Activated B cell treated with CpG ODN at 0.5 μM for 24 hours (primary cell): ENCODE measurements at regions of chr1 and their contacts with region 1.

Region 1: DNA sequence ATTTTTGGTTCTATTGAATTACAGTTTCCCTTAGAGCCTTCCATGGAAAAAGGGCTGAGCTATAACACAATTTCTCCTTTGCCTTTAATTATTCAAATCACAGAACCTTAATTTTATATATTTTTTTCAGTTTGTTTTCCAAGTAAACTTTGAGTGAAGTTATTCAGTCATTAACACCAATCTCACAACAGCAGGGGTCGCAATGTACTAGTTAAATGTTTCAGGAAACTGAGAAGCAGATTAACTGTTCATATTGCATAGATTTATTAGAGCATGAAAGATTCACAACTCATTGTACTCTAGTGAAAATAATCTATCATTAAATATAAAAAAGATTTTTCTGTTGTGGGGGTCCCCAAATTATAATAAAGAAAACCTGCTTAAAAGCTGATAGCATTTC is 64.1 kb downstream of the KIFAP3 start:
- DNase-seq: no peak
- ATAC-seq: no peak
- H3K4me3 Mint-ChIP-seq: no peak overlapping the region
- H3K27ac Mint-ChIP-seq: no peak overlapping the region
- H3K4me1 Mint-ChIP-seq: no peaks in the 10 kb centered on the region
- H3K27me3 Mint-ChIP-seq: no peaks in the 10 kb centered on the region
- CTCF ChIP-seq: no peak

Region 2: GRCh38 chr1:169460191-169460833 is 550.1 kb before region 1 on chr1:
- CTCF ChIA-PET with region 1: no interaction called
- POLR2A ChIA-PET with region 1: no interaction called
- intact Hi-C with region 1: no loop called
- DNase-seq: no peak
- ATAC-seq: no peak
- H3K4me3 Mint-ChIP-seq: peak overlapping the region; percentile 60
- H3K27ac Mint-ChIP-seq: no peak overlapping the region
- H3K4me1 Mint-ChIP-seq: peaks cover 4% of the 10 kb centered on the region
- H3K27me3 Mint-ChIP-seq: peaks cover 20% of the 10 kb centered on the region
- CTCF ChIP-seq: no peak

Region 3: DNA sequence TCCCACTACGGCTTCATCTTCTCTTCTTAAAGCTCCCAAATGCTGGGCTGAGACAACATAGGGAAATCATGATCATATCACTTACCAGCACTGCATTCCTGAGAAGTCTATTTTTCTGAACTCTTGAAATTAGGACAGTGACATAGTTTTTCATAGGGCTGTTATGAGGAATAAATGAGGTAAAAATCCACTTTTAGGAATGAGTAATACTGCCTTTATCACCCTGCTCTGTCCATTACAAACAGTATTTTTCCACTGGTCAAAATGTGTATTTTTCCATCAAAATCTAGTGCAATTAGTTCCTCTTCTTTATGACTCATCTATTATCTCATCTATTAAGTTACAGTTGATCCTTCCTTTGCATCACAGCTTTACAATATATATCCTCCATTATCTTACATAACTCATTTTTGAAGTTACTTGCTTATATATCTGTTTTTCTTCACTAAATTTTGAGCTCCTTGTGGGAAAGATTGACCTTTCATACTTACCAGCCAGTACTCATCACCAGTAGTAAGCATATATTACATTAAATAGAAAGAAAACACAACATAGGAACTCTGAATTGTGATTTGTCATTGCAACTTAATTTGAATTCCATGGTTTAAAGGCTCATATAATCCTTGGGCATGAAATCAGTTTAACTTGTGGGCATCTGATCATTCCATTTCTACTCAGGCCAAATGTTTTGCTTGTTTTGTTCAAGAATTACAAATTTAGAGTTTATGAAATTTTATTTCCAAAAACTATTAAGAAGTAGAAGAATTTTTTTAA is 690.6 kb after region 1 on chr1:
- CTCF ChIA-PET with region 1: no interaction called
- POLR2A ChIA-PET with region 1: no interaction called
- intact Hi-C with region 1: loop called (anchors 5 kb)
- DNase-seq: no peak
- ATAC-seq: no peak
- H3K4me3 Mint-ChIP-seq: no peak overlapping the region
- H3K27ac Mint-ChIP-seq: no peak overlapping the region
- H3K4me1 Mint-ChIP-seq: no peaks in the 10 kb centered on the region
- H3K27me3 Mint-ChIP-seq: peaks cover 2% of the 10 kb centered on the region
- CTCF ChIP-seq: no peak

Region 4: DNA sequence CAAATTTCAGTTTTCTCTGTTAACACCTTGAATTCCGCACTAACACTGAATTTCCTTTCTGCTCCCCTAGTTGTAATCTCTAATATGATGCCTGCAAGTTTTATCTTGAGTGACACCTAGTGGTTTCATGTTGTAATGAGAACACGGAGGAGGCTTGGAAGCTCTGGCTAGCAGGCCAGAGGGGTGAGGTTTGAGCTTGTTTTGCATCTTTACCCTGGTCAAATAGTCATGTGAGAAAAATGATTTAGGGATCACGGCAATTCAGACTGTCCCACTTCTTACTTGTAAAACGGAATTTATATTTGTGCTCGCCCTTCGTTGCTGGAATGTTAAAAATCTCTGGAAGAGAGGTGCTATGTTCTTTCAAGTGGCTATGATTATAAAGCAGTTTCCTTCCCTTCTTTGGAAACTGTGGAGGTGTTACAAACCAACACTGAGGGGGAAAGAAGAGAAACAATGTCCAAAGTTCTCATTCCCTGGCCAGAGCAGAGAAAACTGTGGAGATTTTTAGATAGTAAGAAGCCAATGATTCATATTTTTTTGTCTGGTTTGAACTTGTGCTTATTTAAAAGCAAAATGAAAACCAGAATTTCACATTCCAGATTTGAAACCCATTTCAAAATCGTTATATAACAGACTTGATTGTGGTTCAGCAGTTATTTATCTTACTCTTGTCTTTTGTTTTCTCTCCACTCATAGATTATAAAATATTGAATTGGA is 919.6 kb after region 1 on chr1:
- CTCF ChIA-PET with region 1: interaction called, 4 read pairs
- POLR2A ChIA-PET with region 1: no interaction called
- intact Hi-C with region 1: loop called (anchors 2 kb)
- DNase-seq: no peak
- ATAC-seq: peak; percentile 67
- H3K4me3 Mint-ChIP-seq: no peak overlapping the region
- H3K27ac Mint-ChIP-seq: no peak overlapping the region
- H3K4me1 Mint-ChIP-seq: peaks cover 3% of the 10 kb centered on the region
- H3K27me3 Mint-ChIP-seq: peaks cover 3% of the 10 kb centered on the region
- CTCF ChIP-seq: no peak